Activated naive CD4-positive, alpha-beta T cell treated with anti-CD3 and anti-CD28 coated beads for 36 hours (primary cell): ENCODE measurements at regions of chr7 and their contacts with region 1.

Region 1: DNA sequence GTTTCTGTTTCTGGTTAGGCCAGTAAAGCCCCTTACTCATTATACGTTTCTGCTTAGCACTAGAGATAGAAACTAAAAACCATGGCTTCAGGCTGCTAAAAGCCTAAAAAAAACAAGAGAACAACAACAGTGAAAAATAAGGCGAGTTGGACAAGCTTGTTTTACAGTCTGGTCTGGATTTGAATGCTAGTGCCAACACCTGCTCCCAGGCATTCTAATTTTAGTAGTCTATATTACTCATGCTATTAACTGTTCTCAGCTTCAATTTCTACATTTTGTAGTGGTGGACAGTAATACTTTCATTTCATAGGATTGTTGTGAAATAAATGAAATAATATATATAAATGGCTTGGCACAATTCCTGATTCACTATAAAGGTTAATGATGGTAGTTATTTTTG is 108.5 kb downstream of the HBP1 start:
- DNase-seq: no peak
- H3K4me3 Mint-ChIP-seq: no peak overlapping the region
- H3K27ac Mint-ChIP-seq: no peak overlapping the region
- H3K4me1 Mint-ChIP-seq: no peaks in the 10 kb centered on the region
- H3K27me3 Mint-ChIP-seq: no peaks in the 10 kb centered on the region

Region 2: GRCh38 chr7:107381453-107381852 is 104.1 kb after region 1 on chr7:
- CTCF ChIA-PET with region 1: no interaction called
- intact Hi-C with region 1: no loop called
- DNase-seq: no peak
- H3K4me3 Mint-ChIP-seq: no peak overlapping the region
- H3K27ac Mint-ChIP-seq: no peak overlapping the region
- H3K4me1 Mint-ChIP-seq: peaks cover 8% of the 10 kb centered on the region
- H3K27me3 Mint-ChIP-seq: no peaks in the 10 kb centered on the region

Region 3: GRCh38 chr7:107471292-107472070 is 194.2 kb after region 1 on chr7:
- CTCF ChIA-PET with region 1: interaction called, 10 read pairs
- intact Hi-C with region 1: no loop called
- DNase-seq: no peak
- H3K4me3 Mint-ChIP-seq: no peak overlapping the region
- H3K27ac Mint-ChIP-seq: no peak overlapping the region
- H3K4me1 Mint-ChIP-seq: no peaks in the 10 kb centered on the region
- H3K27me3 Mint-ChIP-seq: no peaks in the 10 kb centered on the region